ENCODE measurements at regions of chr9 and their contacts with region 1.

Region 1: GRCh38 chr9:83617299-83617698 is 5.6 kb upstream of the IDNK start:
- DNase-seq: no peak
- H3K4me3 ChIP-seq: no peak overlapping the region
- H3K27ac ChIP-seq: no peak overlapping the region
- H3K4me1 ChIP-seq: peaks cover 0 to 3% of the 10 kb centered on the region in 2 experiments; a peak in 1 of 4 replicates
- H3K27me3 ChIP-seq: no peaks in the 10 kb centered on the region
- CTCF ChIP-seq: no peak
- EP300 ChIP-seq: no peak
- RAD21 ChIP-seq: no peak

Region 2: GRCh38 chr9:83477571-83477970 is 139.7 kb before region 1 on chr9:
- CTCF ChIA-PET with region 1: no interaction called
- POLR2A ChIA-PET with region 1: no interaction called
- DNase-seq: no peak
- H3K4me3 ChIP-seq: no peak overlapping the region
- H3K27ac ChIP-seq: peak overlapping the region in 1 of 2 experiments; percentile 35; a peak in 2 of 4 replicates
- H3K4me1 ChIP-seq: peaks cover 0 to 7% of the 10 kb centered on the region in 2 experiments; a peak in 2 of 4 replicates
- H3K27me3 ChIP-seq: no peaks in the 10 kb centered on the region
- CTCF ChIP-seq: no peak
- EP300 ChIP-seq: no peak
- RAD21 ChIP-seq: no peak

Region 3: DNA sequence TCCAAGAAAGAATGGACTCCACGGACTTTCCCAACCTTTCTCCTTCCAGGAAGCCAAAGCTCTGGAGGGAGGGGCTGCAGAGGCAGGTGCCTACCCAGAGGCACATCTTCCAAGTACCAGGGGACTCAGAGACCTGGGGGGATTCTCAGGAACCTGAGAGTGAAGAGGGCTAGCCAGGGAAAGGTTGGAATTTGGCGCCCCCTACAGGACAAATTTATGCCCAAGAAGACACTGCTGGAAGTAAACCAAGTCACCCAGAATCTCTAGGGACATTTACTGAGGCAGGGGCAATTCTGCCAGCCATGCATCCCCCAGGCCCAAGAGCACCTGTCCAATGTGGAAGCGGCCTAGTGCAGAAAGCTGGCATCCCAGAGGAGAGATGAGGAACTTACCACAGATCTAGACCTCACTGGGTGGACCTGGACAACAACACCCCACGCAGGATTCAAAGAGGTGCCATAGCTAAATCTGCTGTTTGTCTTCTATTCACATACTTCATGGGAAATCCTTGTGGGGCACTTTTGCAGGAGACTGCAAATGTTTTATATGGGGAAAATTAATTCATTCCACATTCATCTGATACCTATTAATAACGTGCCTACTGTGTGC is 20.3 kb before region 1 on chr9:
- CTCF ChIA-PET with region 1: interaction called, 19 read pairs
- POLR2A ChIA-PET with region 1: no interaction called
- DNase-seq: peak; percentile 54
- H3K4me3 ChIP-seq: no peak overlapping the region; a peak in 1 of 4 replicates
- H3K27ac ChIP-seq: no peak overlapping the region
- H3K4me1 ChIP-seq: no peaks in the 10 kb centered on the region; a peak in 1 of 4 replicates
- H3K27me3 ChIP-seq: no peaks in the 10 kb centered on the region
- CTCF ChIP-seq: peak; percentile 74
- EP300 ChIP-seq: no peak
- RAD21 ChIP-seq: peak; percentile 71

Measured in SK-N-SH (cell line).